GM10248 (cell line): ENCODE measurements at regions of chr15 and their contacts with region 1.

Region 1: DNA sequence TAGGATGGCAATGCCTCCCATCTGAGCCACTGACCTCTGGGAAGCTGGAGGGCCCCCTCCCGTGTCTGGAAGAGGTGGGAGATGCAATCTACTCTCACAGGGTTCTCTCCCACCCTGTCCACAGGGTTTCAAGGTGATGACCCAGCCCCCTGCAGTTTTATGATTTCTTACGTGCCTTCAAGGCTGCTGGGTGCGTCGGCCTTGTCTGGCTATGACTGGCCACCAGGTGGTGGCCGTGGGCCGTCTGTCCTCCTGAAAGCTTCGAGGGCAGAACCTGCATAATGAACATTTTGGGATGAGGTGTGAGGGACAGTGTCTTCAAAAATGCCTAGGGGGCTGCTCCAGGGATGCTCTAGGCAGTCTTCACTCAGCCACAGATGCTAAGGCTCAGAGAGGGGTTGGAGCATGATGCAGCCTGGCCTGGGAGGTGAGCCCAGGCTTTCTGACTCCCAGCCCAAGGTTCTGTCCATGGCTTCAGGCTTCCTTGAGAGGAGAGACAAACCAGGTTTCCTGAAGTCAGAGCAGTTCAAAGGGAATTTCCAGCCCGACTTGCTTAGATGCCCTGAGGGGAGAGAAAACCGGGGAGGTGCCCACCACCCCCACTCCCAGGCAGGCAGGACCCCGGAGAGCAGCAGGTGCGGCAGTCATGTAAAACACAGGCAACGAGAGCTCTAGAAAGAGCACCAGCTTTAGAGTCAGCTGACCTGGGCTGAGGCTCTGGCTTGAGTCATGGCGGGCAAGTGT is 18.7 kb downstream of the ISG20 start:
- DNase-seq: peak; percentile 62
- CTCF ChIP-seq: peak; percentile 48

Region 2: DNA sequence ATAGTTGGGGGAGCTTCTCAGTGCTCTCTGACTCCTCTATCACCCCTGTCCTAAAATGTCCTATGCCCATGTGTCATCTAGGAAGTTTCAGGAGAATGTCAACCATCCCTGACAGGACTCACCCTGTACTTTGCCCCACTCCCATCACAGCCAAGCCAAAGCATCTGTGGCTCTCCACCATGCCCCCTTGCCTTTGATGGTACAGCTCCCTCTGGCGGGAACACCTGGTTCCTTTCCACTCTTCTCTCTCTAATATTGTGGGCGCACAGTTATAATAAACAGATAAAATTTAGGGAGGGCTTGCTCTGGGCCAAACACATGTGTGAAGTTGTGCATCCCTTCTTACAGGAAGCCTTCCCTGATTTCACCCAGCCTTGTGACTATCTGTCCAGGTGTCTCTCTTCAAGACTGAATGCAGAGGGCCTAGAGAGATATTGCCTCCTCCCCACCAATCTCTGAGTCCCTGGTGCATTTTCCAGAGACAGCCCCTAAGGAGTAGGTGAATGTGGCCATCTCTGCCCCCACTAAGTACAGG is 44.1 kb after region 1 on chr15:
- CTCF ChIA-PET with region 1: interaction called, 15 read pairs
- POLR2A ChIA-PET with region 1: no interaction called
- DNase-seq: peak; percentile 65
- CTCF ChIP-seq: peak; percentile 58

Region 3: DNA sequence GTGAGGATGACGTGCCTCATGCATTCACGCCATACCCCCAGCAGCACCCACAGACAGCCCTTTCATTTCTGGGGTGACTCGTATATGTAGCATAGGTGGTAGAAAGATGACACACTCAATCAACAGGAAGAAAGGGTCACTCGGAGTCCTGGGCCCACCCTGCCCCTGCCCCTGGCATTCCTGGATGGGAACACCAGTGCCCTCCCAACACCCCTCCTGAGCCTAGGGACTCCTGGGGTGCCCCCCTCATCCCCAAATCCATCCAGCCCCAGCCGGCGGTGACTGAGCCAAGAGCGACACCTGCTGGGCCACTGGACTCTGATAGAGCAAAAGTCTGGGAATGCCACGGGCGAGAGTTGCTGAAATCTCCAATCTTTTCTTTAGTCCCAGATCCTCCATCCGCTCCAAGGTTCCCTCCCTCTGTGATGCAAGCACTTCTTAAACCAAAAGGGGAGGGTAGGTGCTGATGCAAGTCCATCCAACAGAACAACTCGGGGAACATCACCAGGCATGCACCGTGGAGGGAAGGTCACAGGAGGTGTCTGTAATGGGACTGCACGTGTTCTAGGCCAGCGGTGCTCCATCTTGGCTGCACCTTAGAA is 176.8 kb after region 1 on chr15:
- CTCF ChIA-PET with region 1: interaction called, 12 read pairs
- POLR2A ChIA-PET with region 1: no interaction called
- DNase-seq: no peak
- CTCF ChIP-seq: peak; percentile 49